Panc1 (cell line): ENCODE measurements at regions of chr6 and their contacts with region 1.

Region 1: DNA sequence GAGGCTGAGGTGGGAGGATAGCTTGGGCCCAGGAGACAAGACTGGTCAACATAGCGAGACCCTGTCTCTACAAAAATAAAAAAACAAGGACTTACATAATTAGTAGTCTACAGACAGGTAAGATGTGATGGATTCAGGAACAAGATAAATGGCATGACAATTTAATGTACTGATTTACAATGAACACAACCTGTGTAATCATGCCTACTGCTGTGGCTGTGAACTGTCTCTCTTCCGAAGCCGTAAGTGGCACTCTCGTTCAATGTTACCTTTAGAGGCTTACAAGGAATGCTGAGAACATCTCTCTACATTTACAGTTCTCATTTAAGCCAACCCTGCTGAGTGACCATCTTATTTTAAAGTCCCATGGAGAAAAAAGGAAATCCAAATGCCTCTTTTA is 134.8 kb upstream of the PRDM1 start:
- DNase-seq: no peak
- ATAC-seq: no peak
- H3K4me3 ChIP-seq: no peak overlapping the region
- H3K27ac ChIP-seq: no peak overlapping the region
- H3K4me1 ChIP-seq: no peaks in the 10 kb centered on the region
- H3K27me3 ChIP-seq: no peaks in the 10 kb centered on the region; the same call in 1 of the 2 replicates
- CTCF ChIP-seq: no peak

Region 2: GRCh38 chr6:105545947-105546731 is 405.2 kb before region 1 on chr6:
- CTCF ChIA-PET with region 1: no interaction called
- POLR2A ChIA-PET with region 1: interaction called, 11 read pairs
- in situ Hi-C with region 1: no loop called
- intact Hi-C with region 1: no loop called
- DNase-seq: no peak
- ATAC-seq: no peak
- H3K4me3 ChIP-seq: no peak overlapping the region
- H3K27ac ChIP-seq: no peak overlapping the region; the same call in 1 of the 2 replicates
- H3K4me1 ChIP-seq: no peaks in the 10 kb centered on the region
- H3K27me3 ChIP-seq: no peaks in the 10 kb centered on the region
- CTCF ChIP-seq: no peak